Left ventricle myocardium superior (tissue), 1 donor: ENCODE measurements at regions of chrX and their contacts with region 1.

Region 1: DNA sequence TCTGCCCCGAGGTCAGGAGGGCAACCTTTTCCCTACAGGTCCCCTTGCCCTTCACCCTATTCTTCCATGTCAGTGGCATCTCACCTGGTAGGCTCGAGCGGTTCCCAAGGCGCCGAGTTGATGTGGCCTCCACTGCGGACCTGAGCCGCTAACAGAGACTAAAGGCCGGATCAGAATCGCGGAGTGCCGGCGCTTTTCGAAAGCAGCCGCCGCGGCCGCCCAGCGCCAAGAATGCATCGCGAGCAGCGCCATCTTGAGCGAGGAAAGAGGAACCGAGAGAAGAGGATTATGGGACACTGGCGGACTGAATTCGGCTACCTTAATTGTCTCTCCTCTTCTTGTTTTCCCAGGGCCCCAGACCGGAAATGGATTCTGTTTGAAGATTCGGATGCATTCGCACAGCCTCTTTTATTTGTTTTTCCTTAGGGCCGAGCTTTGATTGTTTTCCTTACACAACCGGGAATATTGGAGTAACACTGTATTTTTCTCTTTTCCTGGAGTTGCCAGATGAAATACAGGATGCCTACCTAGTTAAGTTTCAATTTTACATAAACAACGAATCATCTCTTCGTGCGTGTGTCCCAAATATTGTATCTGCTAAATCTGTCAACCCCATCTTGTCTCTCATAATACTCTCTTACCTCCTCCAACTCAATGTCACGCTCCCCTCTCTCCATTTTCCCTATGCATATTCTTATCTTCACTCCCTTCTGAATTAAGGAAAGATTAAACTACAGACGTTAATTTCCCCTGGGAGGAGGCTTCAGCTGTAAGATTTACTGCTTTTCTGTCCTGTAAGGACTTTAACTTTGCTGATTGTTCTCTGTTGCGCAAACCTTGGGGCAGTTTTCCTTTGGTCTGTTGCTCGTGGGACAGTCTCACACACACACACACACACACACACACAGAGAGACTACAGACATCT is at the start of gene ABCB7:
- DNase-seq: peak; percentile 53
- ATAC-seq: peak; percentile 96
- total RNA-seq, gene ABCB7: 44.1 TPM

Region 2: DNA sequence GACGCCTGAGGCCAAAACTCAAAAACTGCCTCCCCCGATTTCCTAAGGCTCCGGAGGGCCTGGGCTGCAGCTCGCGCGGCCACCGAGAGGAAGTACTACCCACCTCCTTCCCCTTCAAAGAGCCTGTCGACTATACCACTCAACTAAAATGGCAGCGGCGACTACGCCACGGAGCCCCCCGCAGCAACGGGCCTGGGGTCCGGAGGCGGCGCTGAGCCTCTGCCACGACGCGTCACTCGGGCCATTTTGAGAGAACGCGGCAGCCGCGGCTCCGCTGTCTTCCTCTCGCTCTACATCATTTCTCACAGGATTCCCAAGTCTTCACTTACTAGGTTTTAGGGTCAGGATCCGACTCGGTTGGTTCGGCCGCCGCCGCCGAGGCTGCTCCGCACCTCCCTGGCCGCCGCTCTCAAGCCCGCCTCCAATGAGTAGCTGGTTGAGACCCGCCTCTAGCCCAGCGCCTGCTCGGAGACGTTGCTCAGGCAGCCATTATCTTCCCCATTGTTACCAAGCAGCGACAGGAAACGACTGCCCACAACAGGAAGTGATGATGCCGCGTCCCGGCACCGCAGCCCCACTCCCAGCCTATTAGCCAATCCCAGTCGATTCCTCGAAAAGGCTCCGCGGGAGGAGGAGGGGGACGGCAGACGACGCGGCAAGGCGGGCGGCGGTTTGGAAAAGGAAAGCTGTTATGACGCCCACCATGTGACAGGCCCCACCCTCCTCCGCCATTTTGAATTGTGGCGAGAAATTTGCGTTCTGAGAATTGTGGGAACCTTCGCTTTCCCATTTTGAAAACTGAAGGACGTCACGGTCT is 542.0 kb before region 1 on chrX and contains the start of gene RLIM:
- intact Hi-C with region 1: loop called (anchors 10 kb)
- DNase-seq: peak; percentile 93
- ATAC-seq: peak; percentile 100
- total RNA-seq, gene RLIM: 20.7 TPM

Region 3: DNA sequence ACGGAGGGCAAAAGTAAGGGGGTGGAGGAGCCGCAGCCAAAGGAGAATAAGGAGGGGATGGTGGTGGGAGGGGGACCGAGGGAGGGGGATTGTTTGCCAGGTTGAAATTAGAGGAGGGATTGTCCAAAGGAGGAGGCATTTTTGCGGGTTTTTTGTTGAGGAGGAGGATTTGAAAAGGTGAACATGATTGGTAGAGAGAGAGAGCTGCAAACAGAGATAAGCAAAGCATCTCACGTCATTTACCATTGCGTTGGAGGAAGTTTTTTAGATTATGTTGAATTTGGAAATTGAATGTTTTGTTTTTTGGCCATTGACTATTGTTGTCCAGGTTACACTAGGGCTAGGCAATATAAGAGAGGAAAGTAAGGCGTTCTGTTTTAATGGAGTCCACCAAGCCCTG is 54.3 kb after region 1 on chrX:
- intact Hi-C with region 1: no loop called
- DNase-seq: no peak
- ATAC-seq: no peak